Left lung (tissue), 14 donors: ENCODE measurements at regions of chr6 and their contacts with region 1.

Region 1: DNA sequence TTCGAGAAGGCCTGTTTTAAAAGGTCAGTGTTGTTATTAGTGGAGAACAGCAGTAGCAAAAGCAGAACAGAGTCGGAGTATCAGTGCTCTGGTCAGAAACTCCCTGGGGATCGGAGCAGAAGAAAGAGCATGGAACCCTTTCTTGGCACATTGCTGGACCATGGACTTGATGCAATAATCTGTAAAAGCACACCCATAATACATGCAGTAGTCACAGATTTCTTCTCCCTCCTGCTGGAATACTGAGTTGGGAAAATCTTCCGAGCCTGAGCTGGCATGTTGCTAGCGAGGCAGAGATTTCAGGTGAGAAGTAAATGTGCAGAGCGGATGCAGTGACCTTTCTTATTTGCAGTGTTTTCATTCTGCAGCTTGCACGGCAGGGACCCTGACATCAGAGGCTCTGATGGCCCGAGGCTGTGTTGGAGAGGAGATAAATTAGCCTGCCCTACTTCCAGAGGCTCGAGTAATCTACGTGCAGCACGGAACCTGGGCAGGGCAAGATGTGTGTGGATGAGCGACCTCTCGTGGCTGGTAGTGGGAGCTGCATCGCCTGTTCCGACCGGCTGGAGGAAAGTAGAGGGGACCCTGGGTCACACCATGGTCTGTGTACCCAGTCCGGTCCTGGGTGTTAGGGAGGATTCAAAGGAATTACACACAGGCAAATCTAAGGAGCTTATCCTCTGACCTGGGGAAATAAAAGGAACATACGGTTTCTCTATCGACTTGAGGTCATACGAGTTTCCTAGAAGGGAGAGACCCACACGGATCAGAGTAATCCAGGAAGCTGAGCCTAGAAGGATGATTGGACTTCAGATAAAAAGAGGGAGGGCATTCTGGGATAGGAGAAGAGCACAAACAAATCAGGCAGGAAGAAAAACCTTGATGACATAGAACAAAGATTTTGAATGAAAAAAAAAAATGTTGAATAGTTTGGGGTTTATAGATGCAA is 137.0 kb upstream of the STMND1 start:
- DNase-seq: peak; percentile 66 to 84 (median 75)
- ATAC-seq: peak; percentile 99
- H3K4me3 ChIP-seq: no peak overlapping the region
- H3K27ac ChIP-seq: no peak overlapping the region
- H3K4me1 ChIP-seq: peaks cover 0 to 3% of the 10 kb centered on the region in 2 donors
- H3K27me3 ChIP-seq: no peaks in the 10 kb centered on the region
- CTCF ChIP-seq: peak; percentile 80 to 81

Region 2: DNA sequence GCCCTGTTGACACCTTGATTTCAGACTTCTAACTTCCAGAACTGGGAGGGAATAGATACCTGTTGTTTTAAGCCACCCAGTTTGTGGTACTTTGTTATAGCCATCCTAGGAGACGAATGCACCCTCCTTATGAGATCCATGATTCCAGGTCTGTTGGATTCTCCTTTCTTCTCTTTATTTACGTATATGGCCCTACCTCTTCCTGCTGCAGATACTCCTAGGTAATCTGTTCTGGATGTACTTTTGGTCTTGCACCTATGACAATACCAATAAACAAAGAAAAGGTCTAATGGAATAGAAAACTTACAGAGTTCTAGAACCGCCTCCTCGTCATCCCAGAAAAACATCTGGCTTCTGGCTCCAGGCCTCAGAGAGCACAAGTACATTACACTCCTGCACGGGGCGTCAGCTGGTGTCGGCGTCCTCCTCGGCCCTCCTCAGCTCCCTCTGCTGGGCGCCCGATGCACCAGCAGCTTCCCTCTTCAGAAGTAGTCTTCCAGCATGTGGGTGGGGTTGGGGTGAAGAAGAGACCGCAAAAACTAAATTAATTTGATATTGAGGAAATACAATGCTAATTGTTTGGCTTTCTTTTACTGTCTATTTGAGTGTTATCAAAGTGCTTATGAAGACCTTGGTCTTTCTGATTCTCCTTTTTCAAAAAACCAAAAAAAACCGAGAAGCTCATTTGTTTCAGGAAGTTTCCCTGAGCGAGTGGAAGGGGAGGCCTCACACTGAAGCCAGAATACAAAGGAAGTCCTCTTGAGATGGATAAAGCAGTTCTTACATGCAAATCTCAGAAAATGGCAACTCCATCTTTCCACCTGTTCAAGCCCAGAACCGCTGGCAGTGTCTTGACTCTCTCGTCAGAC is 193.9 kb before region 1 on chr6:
- intact Hi-C with region 1: loop called in 1 of 2 experiments (anchors 10 kb)
- DNase-seq: peak in 3 of 4 donors; percentile 69 to 97 (median 85)
- ATAC-seq: peak; percentile 90
- H3K4me3 ChIP-seq: no peak overlapping the region
- H3K27ac ChIP-seq: peak overlapping the region in 1 of 2 donors; percentile 49
- H3K4me1 ChIP-seq: peaks cover 27 to 50% of the 10 kb centered on the region in 2 donors
- H3K27me3 ChIP-seq: no peaks in the 10 kb centered on the region
- CTCF ChIP-seq: peak; percentile 85 to 93